ENCODE measurements at regions of chr16 and their contacts with region 1.

Region 1: DNA sequence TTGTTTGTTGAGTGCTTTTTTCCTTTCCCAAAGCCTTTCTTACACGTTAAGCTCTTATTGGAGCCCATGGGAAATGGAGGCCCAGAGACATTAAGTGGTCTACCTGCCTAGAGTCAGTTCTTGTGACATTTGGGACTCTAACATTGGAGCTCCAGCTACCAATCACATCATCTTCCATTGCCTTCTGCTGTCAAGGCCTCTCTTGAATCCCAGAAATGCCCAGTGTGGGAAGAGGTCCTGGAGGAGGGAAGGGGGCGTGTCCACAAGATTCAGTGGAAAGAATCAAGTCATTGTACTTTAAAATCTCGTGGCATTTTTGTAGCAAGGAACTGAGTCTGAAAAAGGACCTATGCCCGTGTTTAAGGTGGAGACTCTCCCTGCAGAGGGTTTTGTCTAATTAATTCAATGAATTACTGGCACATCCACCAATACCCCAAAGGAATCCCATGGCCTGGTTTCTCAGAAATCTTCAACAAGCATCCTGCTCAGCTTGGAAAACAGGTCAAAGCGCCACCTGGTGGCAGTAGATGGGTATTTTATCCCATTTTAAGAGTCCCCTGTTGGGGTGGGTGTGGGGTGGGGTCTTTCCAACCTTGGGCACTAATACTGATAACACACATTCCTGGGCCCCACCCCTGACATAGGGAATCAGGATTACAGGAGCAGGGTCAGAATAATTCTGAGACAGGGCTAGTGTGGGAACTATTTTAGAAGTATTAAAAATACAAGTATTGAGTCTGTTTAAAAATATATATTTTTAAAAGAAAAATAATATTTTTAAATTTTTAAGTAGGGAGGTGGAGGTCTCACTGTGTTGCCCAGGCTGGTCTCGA is 24.6 kb downstream of the GPT2 start:
- DNase-seq: no peak

Region 2: GRCh38 chr16:46673320-46674013 is 235.3 kb before region 1 on chr16:
- intact Hi-C with region 1: loop called (anchors 5 kb)
- DNase-seq: no peak

Region 3: GRCh38 chr16:46853713-46854443 is 54.9 kb before region 1 on chr16:
- intact Hi-C with region 1: loop called (anchors 1 kb)
- DNase-seq: peak; percentile 85

Region 4: GRCh38 chr16:46954562-46954961 is 45.8 kb after region 1 on chr16:
- intact Hi-C with region 1: no loop called
- DNase-seq: no peak